ENCODE measurements at regions of chr17 and their contacts with region 1.

Region 1: DNA sequence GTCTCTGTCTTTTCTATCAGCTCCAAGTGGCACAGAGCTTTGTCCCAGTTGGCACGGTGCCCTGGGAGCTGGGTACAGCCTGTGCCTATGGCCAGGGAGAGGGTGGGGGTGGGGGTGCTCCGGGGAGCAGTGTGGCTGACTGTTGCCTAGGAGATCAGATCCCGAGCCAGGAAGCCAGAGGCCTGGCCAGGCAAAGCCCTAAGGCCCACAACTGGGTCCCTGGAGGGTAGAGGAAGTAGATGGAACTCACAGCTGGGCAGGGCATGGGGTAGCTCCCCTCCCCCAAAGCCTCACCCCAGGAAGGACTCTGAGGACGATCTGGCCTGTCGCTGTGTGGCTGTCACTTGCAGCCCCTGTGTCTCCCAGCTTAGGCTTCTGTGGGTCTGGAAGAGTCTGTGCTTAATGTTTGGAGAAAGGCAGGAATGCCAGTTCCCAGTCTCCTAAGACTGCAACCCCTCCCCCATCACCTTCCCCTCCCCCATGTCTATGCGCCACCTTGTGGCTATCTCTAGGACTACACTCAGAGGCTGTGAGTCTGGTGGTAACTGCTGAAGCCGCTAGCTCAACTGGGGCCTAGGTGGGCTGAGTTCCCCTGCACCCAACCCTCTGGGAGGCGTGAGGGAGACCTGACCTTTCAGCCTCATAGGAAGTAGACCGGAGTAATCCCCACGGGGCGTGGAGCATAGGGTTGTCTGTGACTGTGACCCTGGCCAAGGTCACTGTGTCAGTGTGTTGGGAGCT is 12.6 kb downstream of the THRA start:
- DNase-seq: peak; percentile 66 to 92
- H3K4me3 ChIP-seq: 0 out of 8 replicates have a peak overlapping the region, but pooled peaks of 1 of the 4 experiments have one; percentile 19
- H3K27ac ChIP-seq: no peak overlapping the region; the same call in 1 of the 2 replicates
- H3K4me1 ChIP-seq: peaks cover 10 to 31% (median 28%) of the 10 kb centered on the region in 4 experiments
- H3K27me3 ChIP-seq: no peaks in the 10 kb centered on the region
- CTCF ChIP-seq: peak; percentile 87 to 94 (median 88)
- EP300 ChIP-seq: 0 out of 3 replicates have a peak, but pooled peaks of 1 of the 2 experiments have one; percentile 41
- POLR2A ChIP-seq: no peak
- RAD21 ChIP-seq: peak; percentile 67 to 74

Region 2: DNA sequence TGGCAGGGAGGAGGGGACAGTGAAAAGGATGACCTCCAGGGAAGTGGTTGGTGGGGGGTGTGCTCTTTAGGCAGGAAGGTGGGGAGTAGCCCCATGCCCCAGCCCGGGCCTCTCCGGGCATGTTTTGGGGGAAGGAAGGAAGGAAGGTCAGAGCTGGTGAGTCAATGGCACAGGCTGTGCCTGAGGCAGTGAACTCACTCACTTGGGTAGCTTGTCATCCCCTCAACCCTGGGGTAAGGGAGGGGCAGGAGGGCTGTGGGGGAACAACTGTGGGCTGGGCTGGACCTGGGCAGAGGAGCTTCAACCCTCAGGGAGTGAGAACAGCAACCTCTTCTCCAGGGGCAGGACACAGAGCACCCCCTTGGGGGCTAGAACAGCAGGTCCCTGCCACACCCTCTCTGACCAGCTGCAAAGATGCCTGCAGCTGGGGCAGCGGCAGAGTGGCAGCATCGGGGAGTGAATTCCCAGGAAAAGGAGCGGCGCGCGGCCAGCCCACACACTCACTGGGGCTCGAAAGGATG is 53.9 kb before region 1 on chr17:
- CTCF ChIA-PET with region 1: interaction called, 876 read pairs
- POLR2A ChIA-PET with region 1: interaction called, 3 read pairs
- DNase-seq: no peak
- H3K4me3 ChIP-seq: no peak overlapping the region
- H3K27ac ChIP-seq: no peak overlapping the region
- H3K4me1 ChIP-seq: peaks cover 0 to 24% (median 16%) of the 10 kb centered on the region in 4 experiments; a peak in 6 of 7 replicates
- H3K27me3 ChIP-seq: no peaks in the 10 kb centered on the region
- CTCF ChIP-seq: no peak
- EP300 ChIP-seq: no peak
- POLR2A ChIP-seq: no peak
- RAD21 ChIP-seq: no peak

Region 3: DNA sequence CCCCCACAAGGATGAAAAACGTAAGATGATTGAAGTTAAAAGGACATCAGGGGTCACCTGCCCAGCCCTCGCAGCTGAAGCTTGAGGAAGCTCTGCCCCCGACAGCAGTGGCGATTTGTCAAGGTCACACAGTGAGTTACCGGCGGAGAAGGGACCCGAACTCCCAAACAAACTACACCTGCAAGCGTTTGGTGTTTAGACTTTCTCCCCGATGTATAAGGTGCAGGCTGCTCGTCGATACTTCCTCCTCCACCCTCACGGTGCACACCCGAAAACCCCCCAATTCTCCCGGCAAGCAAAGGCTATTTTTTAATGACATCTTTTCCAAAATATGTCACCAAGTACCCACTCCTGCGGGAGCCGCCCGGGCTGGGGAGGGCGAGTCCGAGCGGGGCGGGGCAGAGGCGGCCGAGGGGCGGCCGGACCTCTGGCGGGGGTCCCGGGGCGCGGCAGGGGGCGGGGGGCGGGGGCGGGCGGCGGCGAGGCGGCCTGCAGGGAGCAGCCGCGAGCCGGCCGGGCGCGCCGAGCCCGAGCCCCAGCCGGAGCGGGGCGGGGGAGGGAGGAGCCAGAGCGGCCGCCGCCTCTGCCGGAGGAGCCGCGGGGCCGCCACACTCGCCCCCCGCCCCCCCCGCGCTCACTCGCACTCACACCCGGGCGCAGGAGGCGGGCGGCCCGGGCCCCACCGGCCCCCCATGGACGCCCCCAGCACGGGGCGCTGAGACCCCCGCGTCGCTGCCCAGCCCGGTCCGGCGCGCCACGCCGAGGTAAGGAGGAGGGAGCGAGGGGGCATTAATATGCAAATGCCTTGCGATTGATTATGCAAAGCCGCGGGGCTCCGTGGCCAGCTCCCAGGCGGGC is 12.8 kb before region 1 on chr17 and contains the start of gene THRA:
- CTCF ChIA-PET with region 1: interaction called, 521 read pairs
- POLR2A ChIA-PET with region 1: interaction called, 64 read pairs
- DNase-seq: peak in 1 of 2 experiments; percentile 89
- H3K4me3 ChIP-seq: peak within 1 kb of the TSS; percentile 78 to 87 (median 81)
- H3K27ac ChIP-seq: peak within 1 kb of the TSS; percentile 60; the same call in 1 of the 2 replicates
- H3K4me1 ChIP-seq: peaks cover 21 to 46% (median 31%) of the 10 kb centered on the region in 4 experiments
- H3K27me3 ChIP-seq: peaks cover 0 to 15% (median 10%) of the 10 kb centered on the region in 4 experiments; a peak in 6 of 7 replicates
- CTCF ChIP-seq: no peak; a peak in 1 of 4 replicates
- EP300 ChIP-seq: no peak
- POLR2A ChIP-seq: no peak
- RAD21 ChIP-seq: no peak
- total RNA-seq, gene THRA: 10.2 and 11.8 TPM in 2 replicates

Region 4: DNA sequence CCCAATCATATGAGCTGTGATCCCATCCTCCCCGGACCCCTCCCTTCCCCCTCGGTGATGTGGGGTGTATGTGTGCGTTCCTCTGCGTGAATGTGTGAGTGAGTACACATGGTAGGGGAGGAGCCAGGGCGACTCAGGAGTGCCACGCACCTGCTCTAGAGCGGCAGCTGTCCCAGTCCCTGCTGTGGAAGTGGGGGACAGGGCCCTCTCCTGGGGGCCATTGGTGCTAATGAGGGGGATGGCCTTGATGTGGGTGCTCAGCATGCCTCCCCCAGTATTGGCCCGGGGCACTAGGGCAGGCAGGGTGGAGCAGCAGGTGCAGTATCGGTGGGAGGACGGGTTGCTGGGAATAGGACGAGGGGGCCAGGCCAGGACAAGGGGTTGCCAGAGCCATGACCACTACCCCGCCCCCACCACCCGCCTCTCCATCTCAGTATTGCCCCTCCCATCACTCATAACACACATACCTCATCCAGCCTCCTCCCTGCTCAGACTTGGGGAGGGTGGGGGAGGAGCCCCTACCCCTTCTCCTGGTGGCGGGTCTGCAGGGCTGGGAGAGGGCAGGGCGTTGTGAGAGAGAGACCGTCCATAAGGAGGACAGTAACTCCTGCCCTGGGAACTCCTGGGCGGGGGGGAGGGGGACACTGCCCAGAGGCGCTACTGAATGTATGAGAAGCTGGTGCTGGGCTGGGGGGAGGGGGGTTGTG is 16.5 kb after region 1 on chr17:
- CTCF ChIA-PET with region 1: interaction called, 521 read pairs
- POLR2A ChIA-PET with region 1: interaction called, 9 read pairs
- DNase-seq: no peak
- H3K4me3 ChIP-seq: no peak overlapping the region
- H3K27ac ChIP-seq: no peak overlapping the region
- H3K4me1 ChIP-seq: peaks cover 0 to 27% (median 4%) of the 10 kb centered on the region in 4 experiments; a peak in 6 of 7 replicates
- H3K27me3 ChIP-seq: no peaks in the 10 kb centered on the region
- CTCF ChIP-seq: no peak
- EP300 ChIP-seq: no peak
- POLR2A ChIP-seq: no peak
- RAD21 ChIP-seq: no peak

Region 5: GRCh38 chr17:40107522-40108174 is 32.3 kb after region 1 on chr17:
- CTCF ChIA-PET with region 1: interaction called, 87 read pairs
- POLR2A ChIA-PET with region 1: interaction called, 6 read pairs
- DNase-seq: peak in 1 of 2 experiments; percentile 62
- H3K4me3 ChIP-seq: peak overlapping the region in 1 of 4 experiments; percentile 13; a peak in 2 of 8 replicates
- H3K27ac ChIP-seq: no peak overlapping the region
- H3K4me1 ChIP-seq: peaks cover 41 to 54% (median 46%) of the 10 kb centered on the region in 4 experiments
- H3K27me3 ChIP-seq: peaks cover 0 to 26% (median 19%) of the 10 kb centered on the region in 4 experiments; a peak in 6 of 7 replicates
- CTCF ChIP-seq: 0 out of 4 replicates have a peak, but pooled peaks of 1 of the 3 experiments have one; percentile 9
- EP300 ChIP-seq: no peak
- POLR2A ChIP-seq: no peak
- RAD21 ChIP-seq: no peak

Region 6: DNA sequence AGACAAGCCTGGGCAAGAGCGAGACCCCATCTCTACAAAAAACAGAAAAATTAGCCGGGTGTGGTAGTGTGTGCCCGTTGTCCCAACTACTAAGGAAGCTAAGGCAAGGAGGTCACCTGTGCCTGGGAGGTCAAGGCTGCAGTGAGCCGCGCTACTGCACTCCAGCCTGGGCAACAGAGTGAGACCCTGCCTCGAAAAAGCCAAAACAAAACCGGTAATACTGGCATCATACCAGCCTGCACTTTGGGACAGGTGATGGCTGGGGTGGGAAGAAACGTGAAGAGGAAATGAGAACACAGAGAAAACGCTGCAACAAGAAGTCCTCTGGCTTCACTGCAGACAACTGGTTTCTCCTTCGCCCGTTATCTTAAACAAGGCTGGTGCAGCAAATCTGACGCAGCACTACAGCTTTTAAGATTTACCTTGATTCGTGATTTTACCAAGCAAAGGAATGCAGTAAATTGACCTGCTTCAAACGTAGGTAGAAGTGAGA is 64.2 kb after region 1 on chr17:
- CTCF ChIA-PET with region 1: interaction called, 4 read pairs
- POLR2A ChIA-PET with region 1: interaction called, 13 read pairs
- DNase-seq: no peak
- H3K4me3 ChIP-seq: peak overlapping the region; percentile 51 to 88 (median 68)
- H3K27ac ChIP-seq: peak overlapping the region; percentile 84
- H3K4me1 ChIP-seq: peaks cover 0 to 4% (median 1%) of the 10 kb centered on the region in 4 experiments; a peak in 2 of 7 replicates
- H3K27me3 ChIP-seq: no peaks in the 10 kb centered on the region
- CTCF ChIP-seq: no peak
- EP300 ChIP-seq: no peak
- POLR2A ChIP-seq: no peak
- RAD21 ChIP-seq: no peak